Calu3 (cell line): ENCODE measurements at regions of chr12 and their contacts with region 1.

Region 1: GRCh38 chr12:62900686-62901272 is 34.2 kb downstream of the PPM1H start:
- DNase-seq: peak; percentile 45
- H3K4me3 Mint-ChIP-seq: peak overlapping the region; percentile 22
- H3K27ac Mint-ChIP-seq: peak overlapping the region; percentile 87
- H3K4me1 Mint-ChIP-seq: peaks cover 31% of the 10 kb centered on the region
- H3K27me3 Mint-ChIP-seq: no peaks in the 10 kb centered on the region
- CTCF ChIP-seq: no peak

Region 2: GRCh38 chr12:62458626-62459025 is 442.2 kb before region 1 on chr12:
- CTCF ChIA-PET with region 1: no interaction called
- intact Hi-C with region 1: no loop called
- DNase-seq: no peak
- H3K4me3 Mint-ChIP-seq: no peak overlapping the region
- H3K27ac Mint-ChIP-seq: no peak overlapping the region
- H3K4me1 Mint-ChIP-seq: no peaks in the 10 kb centered on the region
- H3K27me3 Mint-ChIP-seq: peaks cover 34% of the 10 kb centered on the region
- CTCF ChIP-seq: no peak

Region 3: GRCh38 chr12:62854024-62854423 is 46.8 kb before region 1 on chr12:
- CTCF ChIA-PET with region 1: no interaction called
- intact Hi-C with region 1: no loop called
- DNase-seq: no peak
- H3K4me3 Mint-ChIP-seq: no peak overlapping the region
- H3K27ac Mint-ChIP-seq: no peak overlapping the region
- H3K4me1 Mint-ChIP-seq: peaks cover 5% of the 10 kb centered on the region
- H3K27me3 Mint-ChIP-seq: no peaks in the 10 kb centered on the region
- CTCF ChIP-seq: no peak

Region 4: GRCh38 chr12:62866451-62867082 is 34.2 kb before region 1 on chr12:
- CTCF ChIA-PET with region 1: no interaction called
- intact Hi-C with region 1: no loop called
- DNase-seq: peak; percentile 59
- H3K4me3 Mint-ChIP-seq: peak overlapping the region; percentile 22
- H3K27ac Mint-ChIP-seq: peak overlapping the region; percentile 57
- H3K4me1 Mint-ChIP-seq: peaks cover 61% of the 10 kb centered on the region
- H3K27me3 Mint-ChIP-seq: no peaks in the 10 kb centered on the region
- CTCF ChIP-seq: no peak

Region 5: DNA sequence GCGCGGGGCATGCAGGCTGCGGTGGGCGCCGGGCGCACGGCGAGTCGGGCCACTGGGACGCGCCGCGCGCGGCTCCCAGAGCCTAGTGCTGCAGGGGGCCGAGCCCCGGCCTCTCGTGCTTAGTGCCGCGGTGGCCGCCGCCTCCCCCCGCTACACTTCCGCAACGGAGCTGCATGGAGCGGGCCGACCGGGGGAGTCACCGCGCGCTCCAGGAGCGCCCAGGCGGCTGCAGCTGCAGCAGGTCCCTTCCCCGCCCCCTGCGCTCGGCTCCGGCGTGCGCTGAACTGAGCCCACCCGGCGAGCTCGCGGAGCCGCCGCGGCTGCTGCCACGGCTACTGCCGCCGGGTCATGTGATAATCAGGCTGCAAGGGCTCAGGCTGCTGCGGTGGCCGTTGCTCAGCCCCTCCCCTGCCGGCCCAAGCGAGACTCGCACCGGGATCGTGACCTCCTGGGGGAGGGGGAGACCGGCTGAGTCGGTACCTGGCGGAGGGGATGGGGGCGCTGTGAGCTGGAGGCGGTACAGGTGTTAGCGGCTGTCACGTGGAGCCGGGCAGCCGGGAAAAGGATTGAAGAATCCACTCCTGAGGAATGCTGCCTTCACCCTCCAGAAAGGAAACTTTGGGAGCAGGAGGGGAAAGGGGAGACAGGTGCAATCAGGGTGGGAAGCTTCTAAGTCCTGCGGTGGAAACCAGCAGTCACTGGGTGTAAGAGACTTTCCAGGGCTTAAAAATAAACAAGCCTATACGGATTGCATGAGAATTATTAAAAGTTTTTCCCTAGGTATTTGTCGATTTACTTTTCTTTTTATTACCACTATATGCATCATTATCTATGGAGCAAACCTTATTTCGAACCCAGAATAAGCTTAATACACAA is 34.3 kb after region 1 on chr12 and contains the start of gene PPM1H:
- CTCF ChIA-PET with region 1: interaction called, 4 read pairs
- intact Hi-C with region 1: loop called (anchors 2 kb)
- DNase-seq: peak; percentile 99
- H3K4me3 Mint-ChIP-seq: peak within 1 kb of the TSS; percentile 76
- H3K27ac Mint-ChIP-seq: peak within 1 kb of the TSS; percentile 90
- H3K4me1 Mint-ChIP-seq: peaks cover 34% of the 10 kb centered on the region
- H3K27me3 Mint-ChIP-seq: no peaks in the 10 kb centered on the region
- CTCF ChIP-seq: peak; percentile 93
- total RNA-seq, gene PPM1H: 36.7 and 39.1 TPM in 2 replicates